ENCODE measurements at regions of chr9 and their contacts with region 1.

Region 1: DNA sequence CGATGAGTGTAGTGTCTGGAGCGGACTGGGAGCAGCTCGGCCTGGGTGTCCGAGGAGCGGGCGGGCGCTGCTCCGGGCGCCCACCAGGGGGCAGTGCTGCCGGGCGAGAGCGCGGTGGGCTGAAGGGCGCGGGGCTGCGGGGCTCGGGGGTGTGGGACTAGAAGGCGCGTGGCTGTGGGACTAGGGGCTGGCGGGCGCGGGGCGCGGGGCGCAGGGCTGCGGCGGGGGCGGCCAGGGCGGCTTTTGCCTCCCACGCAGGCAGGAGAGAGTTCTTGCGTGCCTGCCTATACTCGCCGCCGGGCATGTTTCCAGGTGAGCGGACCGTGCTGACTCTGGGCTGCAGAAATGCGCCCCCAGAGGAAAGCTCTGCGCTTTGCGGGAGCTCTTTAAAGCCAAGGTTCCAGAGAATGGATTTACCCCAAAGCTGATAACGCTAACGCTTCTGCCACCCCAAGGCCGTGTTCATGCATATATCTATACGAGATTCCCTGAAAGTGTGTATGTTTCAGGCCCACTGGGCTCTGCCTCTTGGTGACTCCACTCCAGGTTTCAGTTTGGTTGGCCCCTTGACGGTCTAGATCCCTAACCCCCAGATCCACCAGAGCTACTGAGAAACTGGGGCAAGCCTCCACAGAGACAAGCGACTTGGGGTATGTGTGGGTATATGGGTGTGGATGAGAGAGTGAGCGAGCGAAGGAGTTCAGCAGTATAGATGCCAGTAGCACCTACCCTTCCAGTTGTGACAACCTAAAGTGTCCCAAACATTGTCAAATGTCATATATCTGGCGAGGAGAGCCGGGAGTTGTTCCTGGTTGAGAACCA is 56.2 kb downstream of the ACER2 start:
- DNase-seq: peak; percentile 61 to 79 (median 74)
- H3K4me3 ChIP-seq: peak overlapping the region in 1 of 2 donors; percentile 35
- H3K4me3 Mint-ChIP-seq: peak overlapping the region; percentile 84 to 98 (median 88)
- H3K27ac ChIP-seq: no peak overlapping the region
- H3K27ac Mint-ChIP-seq: peak overlapping the region in 3 of 7 donors; percentile 46 to 89 (median 80)
- H3K4me1 ChIP-seq: peaks cover 9% of the 10 kb centered on the region
- H3K4me1 Mint-ChIP-seq: peaks cover 7 to 14% (median 11%) of the 10 kb centered on the region in 4 donors
- H3K27me3 ChIP-seq: no peaks in the 10 kb centered on the region
- H3K27me3 Mint-ChIP-seq: no peaks in the 10 kb centered on the region

Region 2: DNA sequence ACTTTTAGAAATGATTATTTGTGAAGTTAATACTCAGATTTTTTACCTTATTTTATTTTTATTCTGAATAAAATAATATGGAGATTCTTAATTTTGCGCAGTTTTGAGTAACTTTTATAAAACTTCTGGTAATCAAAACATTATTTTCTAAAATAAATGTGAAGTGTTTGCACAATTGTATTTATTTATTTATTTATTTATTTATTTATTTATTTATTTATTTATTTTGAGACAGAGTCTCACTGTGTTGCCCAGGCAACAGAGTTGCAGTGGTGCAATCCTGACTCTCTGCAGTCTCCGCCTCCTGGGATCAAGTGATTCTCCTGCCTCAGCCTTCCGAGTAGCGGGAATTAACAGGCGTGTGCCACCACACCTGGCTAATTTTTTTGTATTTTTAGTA is 158.4 kb before region 1 on chr9:
- CTCF ChIA-PET with region 1: no interaction called
- POLR2A ChIA-PET with region 1: no interaction called
- intact Hi-C with region 1: no loop called
- DNase-seq: no peak
- H3K4me3 ChIP-seq: no peak overlapping the region
- H3K4me3 Mint-ChIP-seq: no peak overlapping the region
- H3K27ac ChIP-seq: no peak overlapping the region
- H3K27ac Mint-ChIP-seq: no peak overlapping the region
- H3K4me1 ChIP-seq: no peaks in the 10 kb centered on the region
- H3K4me1 Mint-ChIP-seq: peaks cover 0 to 10% (median 1%) of the 10 kb centered on the region in 4 donors
- H3K27me3 ChIP-seq: no peaks in the 10 kb centered on the region
- H3K27me3 Mint-ChIP-seq: no peaks in the 10 kb centered on the region

Region 3: DNA sequence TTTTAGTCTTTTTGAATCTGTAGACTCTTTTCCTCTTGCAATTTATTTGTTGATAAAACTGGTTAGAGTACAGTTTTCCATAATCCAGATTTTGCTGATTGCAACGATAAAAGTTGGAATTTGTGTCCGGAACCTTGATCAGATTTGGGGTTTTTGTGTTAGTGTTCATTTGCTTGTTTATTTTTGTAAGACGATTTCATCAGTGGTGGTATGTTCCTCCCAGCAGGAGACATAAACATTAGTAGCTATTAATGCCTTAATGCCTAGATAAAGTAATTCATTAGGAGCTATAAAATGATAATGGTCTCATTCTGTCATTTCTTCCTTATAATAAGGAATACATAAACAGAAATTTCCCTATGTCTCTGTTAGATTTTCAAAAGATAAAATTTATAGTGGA is 106.3 kb before region 1 on chr9:
- CTCF ChIA-PET with region 1: interaction called, 10 read pairs
- POLR2A ChIA-PET with region 1: no interaction called
- intact Hi-C with region 1: no loop called
- DNase-seq: no peak
- H3K4me3 ChIP-seq: no peak overlapping the region
- H3K4me3 Mint-ChIP-seq: no peak overlapping the region
- H3K27ac ChIP-seq: no peak overlapping the region
- H3K27ac Mint-ChIP-seq: peak overlapping the region in 4 of 7 donors; percentile 1 to 44 (median 38)
- H3K4me1 ChIP-seq: no peaks in the 10 kb centered on the region
- H3K4me1 Mint-ChIP-seq: peaks cover 0 to 1% (median 0%) of the 10 kb centered on the region in 4 donors
- H3K27me3 ChIP-seq: no peaks in the 10 kb centered on the region
- H3K27me3 Mint-ChIP-seq: no peaks in the 10 kb centered on the region

Region 4: DNA sequence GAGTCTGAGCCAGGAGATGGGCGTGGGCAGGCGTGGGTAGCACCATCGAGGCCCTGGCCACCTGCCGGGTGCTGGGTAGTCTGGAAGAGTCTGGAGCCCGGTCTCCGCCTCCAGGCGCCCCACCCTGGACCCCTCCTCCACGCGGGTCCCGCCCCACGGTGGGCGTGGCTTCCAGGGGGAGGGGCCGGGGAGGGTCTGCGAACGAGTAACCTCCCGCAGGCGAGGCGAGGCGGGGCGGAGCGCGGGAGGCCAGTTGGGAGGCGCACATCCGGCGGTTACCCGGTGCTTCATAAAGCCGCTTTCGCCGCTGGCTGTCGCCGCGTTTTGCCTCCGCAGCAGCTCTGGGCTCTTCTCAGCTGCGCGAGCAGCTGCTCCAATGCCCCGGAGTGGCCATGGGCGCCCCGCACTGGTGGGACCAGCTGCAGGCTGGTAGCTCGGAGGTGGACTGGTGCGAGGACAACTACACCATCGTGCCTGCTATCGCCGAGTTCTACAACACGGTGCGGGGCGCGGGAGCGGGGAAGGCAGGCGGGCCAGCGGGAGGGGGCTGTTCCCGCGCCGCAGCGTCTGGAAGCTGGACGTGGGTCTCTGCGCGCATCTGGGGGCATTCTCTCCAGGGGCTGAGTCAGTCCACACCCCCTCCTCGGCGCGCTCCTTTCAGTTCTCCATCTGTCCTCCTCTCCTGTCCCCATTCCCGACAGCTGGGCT is 56.1 kb before region 1 on chr9 and contains the start of gene ACER2:
- CTCF ChIA-PET with region 1: interaction called, 13 read pairs
- POLR2A ChIA-PET with region 1: interaction called, 4 read pairs
- intact Hi-C with region 1: no loop called
- DNase-seq: peak; percentile 91 to 97 (median 93)
- H3K4me3 ChIP-seq: peak within 1 kb of the TSS; percentile 94 to 100
- H3K4me3 Mint-ChIP-seq: peak within 1 kb of the TSS; percentile 91 to 96 (median 96)
- H3K27ac ChIP-seq: peak within 1 kb of the TSS; percentile 69
- H3K27ac Mint-ChIP-seq: peak within 1 kb of the TSS; percentile 65 to 94 (median 90)
- H3K4me1 ChIP-seq: peaks cover 23% of the 10 kb centered on the region
- H3K4me1 Mint-ChIP-seq: peaks cover 5 to 24% (median 16%) of the 10 kb centered on the region in 4 donors
- H3K27me3 ChIP-seq: no peaks in the 10 kb centered on the region
- H3K27me3 Mint-ChIP-seq: no peaks in the 10 kb centered on the region
- total RNA-seq, gene ACER2: 5.9 to 6.0 TPM

Region 5: DNA sequence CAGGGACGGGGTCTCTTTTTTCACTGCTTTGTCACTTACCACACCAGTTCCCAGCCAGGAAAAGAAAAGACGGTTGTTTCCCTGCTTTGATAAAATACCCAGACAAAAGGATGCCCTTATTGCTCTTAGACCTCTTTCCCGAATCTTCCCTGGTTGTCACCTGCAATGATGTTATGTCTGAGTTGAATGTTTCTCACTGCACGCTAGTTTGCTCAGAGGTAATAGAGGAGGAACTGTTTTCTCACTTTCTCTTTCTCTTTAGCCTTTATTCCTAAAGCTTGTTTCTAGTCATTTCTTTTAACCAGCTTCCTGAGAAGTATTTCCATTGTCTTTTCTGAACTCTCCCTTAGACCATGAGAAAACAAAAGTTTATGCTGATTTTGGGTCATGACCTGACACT is 23.2 kb before region 1 on chr9:
- CTCF ChIA-PET with region 1: interaction called, 29 read pairs
- POLR2A ChIA-PET with region 1: no interaction called
- intact Hi-C with region 1: no loop called
- DNase-seq: peak in 3 of 5 donors; percentile 8 to 25 (median 11)
- H3K4me3 ChIP-seq: no peak overlapping the region
- H3K4me3 Mint-ChIP-seq: peak overlapping the region; percentile 22 to 85 (median 76)
- H3K27ac ChIP-seq: peak overlapping the region; percentile 32
- H3K27ac Mint-ChIP-seq: peak overlapping the region in 6 of 7 donors; percentile 6 to 92 (median 74)
- H3K4me1 ChIP-seq: peaks cover 8% of the 10 kb centered on the region
- H3K4me1 Mint-ChIP-seq: peaks cover 9 to 15% (median 13%) of the 10 kb centered on the region in 4 donors
- H3K27me3 ChIP-seq: no peaks in the 10 kb centered on the region
- H3K27me3 Mint-ChIP-seq: no peaks in the 10 kb centered on the region

Region 6: DNA sequence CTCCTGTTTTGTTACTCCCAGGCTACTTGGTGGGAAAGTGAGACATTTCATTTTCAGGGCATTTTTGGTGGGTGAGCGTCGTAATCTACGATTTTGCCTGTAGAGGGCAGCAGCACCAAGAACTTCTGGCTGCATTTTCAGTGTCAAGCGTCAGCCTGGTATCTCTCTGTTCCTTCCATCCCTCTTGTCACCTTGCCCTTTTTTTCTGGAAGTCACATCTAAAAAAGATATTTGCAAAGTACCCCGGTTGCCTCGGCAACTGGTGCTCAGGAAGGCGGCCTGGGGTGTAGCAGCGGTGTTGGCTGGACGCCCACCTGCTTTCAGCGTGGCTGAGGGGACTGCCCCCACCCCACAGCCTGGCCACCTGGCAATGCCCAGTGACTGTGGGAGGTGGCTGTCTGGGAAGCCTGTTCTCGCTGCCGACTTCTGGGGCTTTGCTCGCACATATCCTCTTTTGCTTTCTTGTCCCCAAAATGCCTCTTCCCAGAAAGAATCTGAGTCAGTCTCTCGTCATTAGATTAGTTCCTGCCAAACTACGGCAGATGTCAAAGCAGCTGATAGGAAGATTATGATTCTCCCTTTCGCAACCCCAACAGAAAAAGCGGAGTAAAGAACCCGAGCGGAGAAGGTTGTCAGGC is 28.3 kb after region 1 on chr9:
- CTCF ChIA-PET with region 1: interaction called, 21 read pairs
- POLR2A ChIA-PET with region 1: no interaction called
- intact Hi-C with region 1: no loop called
- DNase-seq: peak in 4 of 5 donors; percentile 17 to 32 (median 28)
- H3K4me3 ChIP-seq: no peak overlapping the region
- H3K4me3 Mint-ChIP-seq: peak overlapping the region; percentile 8 to 73 (median 36)
- H3K27ac ChIP-seq: no peak overlapping the region
- H3K27ac Mint-ChIP-seq: peak overlapping the region in 1 of 7 donors; percentile 66
- H3K4me1 ChIP-seq: peaks cover 7% of the 10 kb centered on the region
- H3K4me1 Mint-ChIP-seq: peaks cover 6 to 14% (median 12%) of the 10 kb centered on the region in 4 donors
- H3K27me3 ChIP-seq: no peaks in the 10 kb centered on the region
- H3K27me3 Mint-ChIP-seq: peaks cover 4 to 12% of the 10 kb centered on the region in 2 donors

Region 7: GRCh38 chr9:19527663-19528062 is 62.7 kb after region 1 on chr9:
- CTCF ChIA-PET with region 1: no interaction called
- POLR2A ChIA-PET with region 1: no interaction called
- intact Hi-C with region 1: no loop called
- DNase-seq: no peak
- H3K4me3 ChIP-seq: no peak overlapping the region
- H3K4me3 Mint-ChIP-seq: no peak overlapping the region
- H3K27ac ChIP-seq: no peak overlapping the region
- H3K27ac Mint-ChIP-seq: no peak overlapping the region
- H3K4me1 ChIP-seq: no peaks in the 10 kb centered on the region
- H3K4me1 Mint-ChIP-seq: no peaks in the 10 kb centered on the region
- H3K27me3 ChIP-seq: no peaks in the 10 kb centered on the region
- H3K27me3 Mint-ChIP-seq: peaks cover 5 to 6% of the 10 kb centered on the region in 2 donors